ENCODE measurements at regions of chr1 and their contacts with region 1.

Region 1: DNA sequence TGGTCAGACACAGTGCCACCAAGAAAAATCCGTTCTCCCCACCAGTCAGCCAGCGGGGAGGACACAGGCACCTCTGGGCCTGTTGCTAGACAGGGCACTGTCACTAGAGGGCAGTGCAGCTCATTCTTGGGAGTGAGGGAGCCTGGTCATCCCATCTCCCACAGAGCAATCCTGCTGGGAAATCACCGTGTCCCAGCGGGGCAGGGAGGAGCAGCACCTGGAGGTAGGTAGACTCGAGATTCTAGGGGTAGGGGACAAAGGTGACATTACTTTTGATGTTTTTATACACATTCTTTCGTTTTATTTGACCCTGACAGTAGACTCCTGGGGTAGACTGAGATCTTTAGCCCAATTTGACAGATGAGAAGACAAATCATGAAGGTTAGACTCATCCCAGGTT is 6.7 kb upstream of the CAMK1G start:
- DNase-seq: peak; percentile 27 to 94
- H3K4me3 ChIP-seq: no peak overlapping the region
- H3K27ac ChIP-seq: no peak overlapping the region
- H3K4me1 ChIP-seq: peaks cover 0 to 4% (median 0%) of the 10 kb centered on the region in 4 experiments; a peak in 1 of 7 replicates
- H3K27me3 ChIP-seq: no peaks in the 10 kb centered on the region
- CTCF ChIP-seq: peak; percentile 88 to 98 (median 92)
- EP300 ChIP-seq: no peak
- POLR2A ChIP-seq: no peak
- RAD21 ChIP-seq: peak; percentile 86 to 89

Region 2: DNA sequence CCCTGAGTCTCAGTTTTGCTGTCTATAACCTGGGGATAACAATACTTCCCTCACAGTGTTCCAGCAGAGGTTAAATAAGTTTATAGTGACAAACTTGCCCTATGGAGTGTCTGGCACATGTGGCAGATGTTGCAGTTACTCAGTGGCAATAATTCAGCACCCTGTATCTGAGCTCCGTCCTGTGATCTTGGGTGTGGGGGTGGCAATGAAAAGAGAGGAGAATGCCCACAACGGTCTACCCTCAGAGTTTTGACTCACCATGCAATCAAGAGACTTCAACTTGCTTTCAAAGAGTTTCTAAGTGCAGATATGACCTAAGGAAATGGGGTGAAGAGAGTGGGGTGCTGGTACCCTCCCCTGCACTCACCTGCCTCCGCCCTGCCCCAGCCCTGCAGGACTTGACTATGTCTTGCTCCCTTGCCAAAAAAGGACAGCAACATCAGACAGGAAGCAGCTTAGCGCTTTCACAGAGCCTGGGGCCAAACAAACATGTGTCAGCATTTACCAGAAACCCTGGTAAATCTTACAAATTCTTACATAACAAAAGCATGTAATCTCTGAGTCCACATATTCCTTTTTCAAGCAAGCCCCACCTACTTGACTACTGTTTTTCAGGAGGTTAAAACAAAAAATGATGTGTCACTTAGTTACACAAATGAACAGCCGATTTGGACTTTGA is 178.3 kb before region 1 on chr1:
- CTCF ChIA-PET with region 1: no interaction called
- POLR2A ChIA-PET with region 1: no interaction called
- DNase-seq: no peak
- H3K4me3 ChIP-seq: no peak overlapping the region
- H3K27ac ChIP-seq: no peak overlapping the region
- H3K4me1 ChIP-seq: peaks cover 3 to 9% (median 6%) of the 10 kb centered on the region in 4 experiments; a peak in 6 of 7 replicates
- H3K27me3 ChIP-seq: no peaks in the 10 kb centered on the region
- CTCF ChIP-seq: no peak
- EP300 ChIP-seq: no peak
- POLR2A ChIP-seq: no peak
- RAD21 ChIP-seq: no peak

Region 3: DNA sequence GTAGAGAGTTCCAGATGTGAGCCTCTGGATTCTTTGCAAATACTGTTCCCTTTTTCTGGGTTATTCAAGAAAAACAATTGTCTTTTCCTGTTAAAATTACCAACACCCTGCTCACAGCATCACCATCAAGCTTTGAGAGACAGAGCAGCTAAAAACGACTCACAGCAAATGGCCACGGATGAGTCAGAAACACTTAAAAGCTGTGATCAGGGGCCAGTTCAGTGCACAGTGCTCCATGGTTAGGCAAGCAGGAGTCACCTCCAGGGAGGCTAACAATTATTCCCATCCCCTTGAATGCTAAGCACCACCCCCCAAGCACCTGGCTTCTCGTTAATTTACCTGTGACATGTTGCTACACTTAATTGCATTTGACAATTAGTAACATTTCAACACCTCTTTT is 121.7 kb before region 1 on chr1:
- CTCF ChIA-PET with region 1: no interaction called
- POLR2A ChIA-PET with region 1: no interaction called
- DNase-seq: no peak
- H3K4me3 ChIP-seq: no peak overlapping the region
- H3K27ac ChIP-seq: no peak overlapping the region
- H3K4me1 ChIP-seq: no peaks in the 10 kb centered on the region; a peak in 1 of 7 replicates
- H3K27me3 ChIP-seq: peaks cover 0 to 1% (median 0%) of the 10 kb centered on the region in 4 experiments; a peak in 1 of 7 replicates
- CTCF ChIP-seq: no peak
- EP300 ChIP-seq: no peak
- POLR2A ChIP-seq: no peak
- RAD21 ChIP-seq: no peak

Region 4: GRCh38 chr1:209601809-209602657 is 25.2 kb after region 1 on chr1:
- CTCF ChIA-PET with region 1: interaction called, 636 read pairs
- POLR2A ChIA-PET with region 1: no interaction called
- DNase-seq: no peak
- H3K4me3 ChIP-seq: no peak overlapping the region
- H3K27ac ChIP-seq: no peak overlapping the region
- H3K4me1 ChIP-seq: no peaks in the 10 kb centered on the region
- H3K27me3 ChIP-seq: no peaks in the 10 kb centered on the region
- CTCF ChIP-seq: peak; percentile 75 to 86 (median 84)
- EP300 ChIP-seq: no peak
- POLR2A ChIP-seq: no peak
- RAD21 ChIP-seq: peak; percentile 83 to 84

Region 5: GRCh38 chr1:209643285-209644020 is 66.7 kb after region 1 on chr1:
- CTCF ChIA-PET with region 1: interaction called, 16 read pairs
- POLR2A ChIA-PET with region 1: no interaction called
- DNase-seq: no peak
- H3K4me3 ChIP-seq: no peak overlapping the region
- H3K27ac ChIP-seq: no peak overlapping the region
- H3K4me1 ChIP-seq: 0 out of 7 replicates have a peak, but pooled peaks cover 0 to 5% (median 0%) of the 10 kb centered on the region in 4 experiments
- H3K27me3 ChIP-seq: no peaks in the 10 kb centered on the region
- CTCF ChIP-seq: no peak
- EP300 ChIP-seq: no peak
- POLR2A ChIP-seq: no peak
- RAD21 ChIP-seq: no peak

Region 6: GRCh38 chr1:209651148-209651547 is 74.3 kb after region 1 on chr1:
- CTCF ChIA-PET with region 1: interaction called, 22 read pairs
- POLR2A ChIA-PET with region 1: no interaction called
- DNase-seq: no peak
- H3K4me3 ChIP-seq: no peak overlapping the region
- H3K27ac ChIP-seq: no peak overlapping the region
- H3K4me1 ChIP-seq: peaks cover 0 to 11% (median 10%) of the 10 kb centered on the region in 4 experiments; a peak in 4 of 7 replicates
- H3K27me3 ChIP-seq: 0 out of 7 replicates have a peak, but pooled peaks cover 0 to 1% (median 0%) of the 10 kb centered on the region in 4 experiments
- CTCF ChIP-seq: no peak
- EP300 ChIP-seq: no peak
- POLR2A ChIP-seq: no peak
- RAD21 ChIP-seq: no peak

Region 7: DNA sequence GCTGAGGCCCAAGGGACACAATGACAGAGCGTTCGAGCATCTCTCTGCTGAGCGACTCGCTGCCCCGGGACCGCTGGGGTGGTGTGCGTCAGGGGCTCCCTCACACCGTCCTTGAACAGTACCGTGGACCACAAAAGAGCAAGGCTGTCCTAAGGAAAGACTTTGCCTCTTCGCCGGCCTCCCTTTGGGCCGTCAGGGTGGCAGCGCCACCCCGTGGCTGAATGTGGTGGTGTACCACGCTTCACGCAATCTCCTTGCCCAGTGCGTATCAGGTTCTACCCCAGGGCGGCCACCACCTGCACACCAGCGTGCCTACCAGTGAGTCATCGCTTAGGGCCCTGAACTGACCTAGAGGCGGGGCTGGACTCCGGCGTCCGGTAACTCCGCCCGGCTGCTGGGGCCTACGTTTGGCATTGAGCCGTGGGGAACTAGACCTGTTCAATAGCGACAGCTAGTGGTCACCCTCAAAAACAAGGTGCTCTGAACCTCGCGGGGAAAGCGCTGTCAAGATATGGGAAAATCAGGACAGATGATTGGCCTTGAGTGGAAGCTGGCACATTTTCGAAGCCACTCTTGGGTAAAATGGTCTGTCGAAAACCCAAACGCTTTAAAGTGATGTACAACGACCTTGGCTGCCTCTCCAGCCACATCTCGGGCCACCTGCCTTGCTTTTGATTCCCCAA is 170.9 kb after region 1 on chr1:
- CTCF ChIA-PET with region 1: interaction called, 12 read pairs
- POLR2A ChIA-PET with region 1: no interaction called
- DNase-seq: peak; percentile 99
- H3K4me3 ChIP-seq: peak overlapping the region in 1 of 4 experiments; percentile 51; a peak in 4 of 8 replicates
- H3K27ac ChIP-seq: no peak overlapping the region
- H3K4me1 ChIP-seq: peaks cover 0 to 11% (median 0%) of the 10 kb centered on the region in 4 experiments; a peak in 1 of 7 replicates
- H3K27me3 ChIP-seq: peaks cover 0 to 4% (median 0%) of the 10 kb centered on the region in 4 experiments; a peak in 1 of 7 replicates
- CTCF ChIP-seq: peak; percentile 70 to 97 (median 94)
- EP300 ChIP-seq: peak in 1 of 2 experiments; percentile 76; a peak in 1 of 3 replicates
- POLR2A ChIP-seq: no peak
- RAD21 ChIP-seq: peak; percentile 70 to 75

Region 8: GRCh38 chr1:209784265-209785169 is 207.7 kb after region 1 on chr1 and contains the start of gene C1orf74:
- CTCF ChIA-PET with region 1: no interaction called
- POLR2A ChIA-PET with region 1: no interaction called
- DNase-seq: peak; percentile 95 to 100
- H3K4me3 ChIP-seq: peak within 1 kb of the TSS; percentile 69 to 94 (median 78)
- H3K27ac ChIP-seq: peak within 1 kb of the TSS; percentile 77
- H3K4me1 ChIP-seq: peaks cover 0 to 6% (median 2%) of the 10 kb centered on the region in 4 experiments; a peak in 2 of 7 replicates
- H3K27me3 ChIP-seq: no peaks in the 10 kb centered on the region
- CTCF ChIP-seq: no peak
- EP300 ChIP-seq: peak in 1 of 2 experiments; percentile 54; a peak in 1 of 3 replicates
- POLR2A ChIP-seq: peak; percentile 92 to 96
- RAD21 ChIP-seq: no peak; a peak in 1 of 4 replicates
- total RNA-seq, gene C1orf74: 3.9 and 4.1 TPM in 2 replicates